ENCODE measurements at regions of chr6 and their contacts with region 1.

Region 1: DNA sequence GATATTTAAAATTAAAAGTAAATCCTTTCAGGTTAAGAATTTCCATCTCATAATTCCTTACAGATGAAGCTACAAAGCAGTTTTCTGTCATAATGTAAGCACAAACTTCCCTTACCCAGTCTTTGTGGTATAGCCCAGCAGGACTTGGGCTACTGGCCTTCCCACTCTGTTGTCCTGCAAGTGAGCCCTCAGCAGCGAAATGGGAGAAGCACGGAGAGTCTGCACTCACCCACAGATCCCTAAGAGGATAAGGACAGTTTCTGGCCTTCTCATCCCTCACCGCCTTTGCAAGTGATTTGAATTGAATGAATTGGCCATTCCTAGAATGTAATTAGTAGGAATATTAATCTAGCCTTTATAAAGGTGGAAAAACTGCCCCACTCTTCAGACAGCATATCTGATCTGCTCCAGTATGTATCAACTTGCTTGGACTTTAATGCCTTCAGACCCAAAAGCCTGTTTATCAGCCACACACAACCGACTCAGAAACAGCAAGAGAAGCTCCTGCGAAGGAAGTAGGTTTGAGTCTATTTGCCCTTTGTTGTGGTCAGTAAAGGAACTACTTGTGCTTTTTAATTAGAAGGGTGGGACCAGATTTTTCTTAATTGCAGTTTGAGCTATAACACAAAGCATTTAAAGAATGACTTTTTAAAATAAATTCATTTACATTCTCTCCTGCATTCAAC is 29.9 kb upstream of the PRDM1 start:
- DNase-seq: peak; percentile 37
- H3K4me3 Mint-ChIP-seq: peak overlapping the region; percentile 23
- H3K27ac Mint-ChIP-seq: peak overlapping the region; percentile 27
- H3K4me1 Mint-ChIP-seq: peaks cover 29% of the 10 kb centered on the region
- H3K27me3 Mint-ChIP-seq: peaks cover 2% of the 10 kb centered on the region

Region 2: GRCh38 chr6:106037060-106037459 is 19.1 kb before region 1 on chr6:
- CTCF ChIA-PET with region 1: interaction called, 11 read pairs
- POLR2A ChIA-PET with region 1: no interaction called
- DNase-seq: no peak
- H3K4me3 Mint-ChIP-seq: no peak overlapping the region
- H3K27ac Mint-ChIP-seq: no peak overlapping the region
- H3K4me1 Mint-ChIP-seq: peaks cover 7% of the 10 kb centered on the region
- H3K27me3 Mint-ChIP-seq: no peaks in the 10 kb centered on the region

Region 3: DNA sequence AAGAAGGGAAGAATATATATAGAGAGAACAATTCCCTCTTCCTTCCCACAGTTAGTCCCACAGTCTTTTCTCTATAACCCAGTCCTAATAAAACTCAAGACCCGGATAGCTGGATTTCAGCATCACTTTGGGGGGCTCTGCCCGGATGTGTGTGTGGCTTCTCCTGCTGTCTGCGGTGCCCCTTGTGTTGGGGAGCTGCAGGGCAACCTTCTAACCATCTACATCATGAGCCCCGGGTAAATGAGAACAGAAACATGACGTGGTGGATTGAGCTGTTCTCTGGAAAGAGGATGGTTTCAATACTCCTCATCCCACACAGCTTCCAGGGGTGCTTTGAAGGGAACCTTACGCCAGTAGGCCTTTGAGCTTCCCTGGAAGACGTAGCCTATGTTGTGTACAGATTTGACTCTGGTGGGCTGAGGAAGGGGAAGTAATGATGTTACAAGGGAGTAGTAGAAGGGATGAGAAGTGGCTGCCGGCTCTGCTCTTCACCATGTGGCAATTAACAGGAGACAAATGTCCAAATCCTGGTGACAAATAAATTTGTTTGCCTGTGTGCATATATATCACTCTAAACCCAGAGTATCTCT is 16.4 kb after region 1 on chr6:
- CTCF ChIA-PET with region 1: no interaction called
- POLR2A ChIA-PET with region 1: no interaction called
- DNase-seq: no peak
- H3K4me3 Mint-ChIP-seq: no peak overlapping the region
- H3K27ac Mint-ChIP-seq: no peak overlapping the region
- H3K4me1 Mint-ChIP-seq: no peaks in the 10 kb centered on the region
- H3K27me3 Mint-ChIP-seq: peaks cover 19% of the 10 kb centered on the region